PC-3 (cell line): ENCODE measurements at regions of chr6 and their contacts with region 1.

Region 1: GRCh38 chr6:27237089-27237803 is 10.3 kb upstream of the PRSS16 start:
- DNase-seq: peak; percentile 73
- ATAC-seq: peak; percentile 34
- H3K4me3 ChIP-seq: peak overlapping the region; percentile 62
- H3K27ac ChIP-seq: peak overlapping the region; percentile 34; the same call in 1 of the 2 replicates
- H3K4me1 ChIP-seq: peaks cover 11% of the 10 kb centered on the region; the same call in 1 of the 2 replicates
- H3K27me3 ChIP-seq: no peaks in the 10 kb centered on the region
- CTCF ChIP-seq: no peak

Region 2: GRCh38 chr6:27251606-27252251 is 14.5 kb after region 1 on chr6:
- CTCF ChIA-PET with region 1: no interaction called
- POLR2A ChIA-PET with region 1: interaction called, 9 read pairs
- intact Hi-C with region 1: loop called (anchors 1 kb)
- DNase-seq: peak; percentile 92
- ATAC-seq: peak; percentile 88
- H3K4me3 ChIP-seq: peak overlapping the region; percentile 98
- H3K27ac ChIP-seq: peak overlapping the region; percentile 43
- H3K4me1 ChIP-seq: peaks cover 9% of the 10 kb centered on the region; the same call in 1 of the 2 replicates
- H3K27me3 ChIP-seq: no peaks in the 10 kb centered on the region
- CTCF ChIP-seq: peak; percentile 70

Region 3: DNA sequence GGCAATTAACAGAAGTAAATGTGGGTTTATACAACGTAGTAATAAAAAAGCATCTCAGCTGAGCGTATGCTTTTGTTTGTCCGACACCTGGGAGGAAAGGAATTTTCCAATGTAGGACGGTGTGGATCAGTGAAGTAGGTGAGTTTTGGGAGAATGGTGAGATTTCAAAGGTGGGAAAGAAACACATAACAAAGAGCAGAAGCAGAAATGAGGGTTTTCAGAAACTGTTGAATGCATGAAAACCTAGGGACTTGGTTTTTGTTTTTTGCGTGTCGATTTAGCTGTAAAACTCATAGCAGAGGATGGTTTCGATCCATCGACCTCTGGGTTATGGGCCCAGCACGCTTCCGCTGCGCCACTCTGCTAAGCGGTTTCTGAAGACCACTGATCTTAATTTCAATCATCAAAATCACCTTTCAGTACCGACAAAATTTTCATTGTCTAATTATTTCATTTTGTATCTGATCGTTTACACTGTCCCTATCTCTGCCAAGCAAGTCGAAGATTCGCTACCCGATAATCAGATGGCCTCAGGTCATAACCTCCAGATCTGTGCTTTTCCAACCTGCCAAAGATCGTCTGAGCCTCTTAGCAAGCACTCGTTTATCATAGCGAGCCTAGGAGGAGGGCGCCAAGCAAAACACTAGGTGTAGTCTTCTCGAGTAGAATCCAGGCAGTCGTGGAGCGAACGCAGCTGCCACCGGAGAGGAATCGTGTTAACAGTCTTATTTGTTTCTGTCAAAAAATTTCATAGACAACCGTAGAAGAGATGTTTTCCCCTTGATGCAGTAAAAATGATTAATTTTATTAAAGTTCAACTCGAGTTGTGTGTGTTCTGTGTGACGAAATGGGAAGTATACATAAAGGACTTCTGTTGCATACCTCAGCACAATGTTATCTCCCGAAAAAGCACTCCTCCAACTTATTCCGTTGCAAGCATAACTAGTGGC is 95.7 kb after region 1 on chr6:
- CTCF ChIA-PET with region 1: no interaction called
- POLR2A ChIA-PET with region 1: no interaction called
- intact Hi-C with region 1: no loop called
- DNase-seq: peak; percentile 77
- ATAC-seq: peak; percentile 91
- H3K4me3 ChIP-seq: peak overlapping the region; percentile 76
- H3K27ac ChIP-seq: no peak overlapping the region
- H3K4me1 ChIP-seq: no peaks in the 10 kb centered on the region
- H3K27me3 ChIP-seq: no peaks in the 10 kb centered on the region
- CTCF ChIP-seq: no peak